ENCODE measurements at regions of chr4 and their contacts with region 1.

Region 1: DNA sequence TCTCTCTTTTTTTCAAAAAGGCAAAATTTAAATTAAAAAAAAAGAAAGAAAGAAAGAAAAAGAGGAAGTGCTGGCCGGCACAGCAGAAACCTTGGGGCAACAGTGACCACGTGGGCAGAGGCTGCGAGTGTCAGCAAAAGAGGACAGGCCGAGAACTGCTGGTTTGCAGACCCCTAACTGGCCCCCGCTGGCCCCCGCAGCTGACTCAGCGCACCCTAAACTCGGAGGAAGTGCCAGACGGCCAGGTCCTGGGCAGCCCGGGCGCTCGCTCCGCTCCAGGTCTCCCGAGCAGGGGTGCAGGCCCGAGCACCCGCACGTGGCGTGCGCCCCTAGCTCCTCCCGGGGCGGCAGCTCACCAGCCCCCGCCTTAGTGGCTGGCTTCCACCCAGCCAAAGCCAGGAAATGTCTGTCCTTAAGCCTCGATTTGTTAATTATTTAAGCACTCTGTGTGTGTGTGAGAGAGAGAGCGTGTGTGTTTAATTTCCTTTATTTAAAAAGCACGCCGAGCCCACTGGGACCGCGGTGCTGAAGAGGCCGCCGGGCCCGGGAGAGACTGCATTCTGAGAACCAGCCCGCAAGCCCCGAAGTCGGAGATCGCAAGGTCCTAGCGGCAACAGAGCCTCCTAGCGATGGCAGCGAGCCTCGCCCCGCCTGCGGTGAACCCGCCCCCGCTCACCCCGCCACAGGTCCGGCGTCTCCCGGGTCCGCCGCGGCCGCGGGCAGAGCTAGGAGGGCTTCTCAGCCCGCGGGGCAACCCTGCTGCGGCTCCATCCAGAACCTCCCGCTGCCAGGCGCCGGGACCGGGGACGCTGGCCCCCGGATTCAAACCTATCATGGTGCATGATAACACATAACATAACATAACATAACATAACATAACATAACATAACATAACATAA is 46.0 kb upstream of the CDKN2AIP start:
- DNase-seq: peak; percentile 60 to 75 (median 69)
- H3K4me3 ChIP-seq: peak overlapping the region; percentile 39 to 78 (median 48)
- H3K4me3 Mint-ChIP-seq: peak overlapping the region; percentile 90 to 95
- H3K27ac ChIP-seq: peak overlapping the region; percentile 66 to 82
- H3K27ac Mint-ChIP-seq: peak overlapping the region; percentile 73 to 95 (median 89)
- H3K4me1 ChIP-seq: peaks cover 48 to 62% of the 10 kb centered on the region in 2 donors
- H3K4me1 Mint-ChIP-seq: peaks cover 57% of the 10 kb centered on the region
- H3K27me3 ChIP-seq: no peaks in the 10 kb centered on the region
- H3K27me3 Mint-ChIP-seq: peaks cover 3 to 12% (median 9%) of the 10 kb centered on the region in 3 donors
- CTCF ChIP-seq: peak; percentile 54

Region 2: DNA sequence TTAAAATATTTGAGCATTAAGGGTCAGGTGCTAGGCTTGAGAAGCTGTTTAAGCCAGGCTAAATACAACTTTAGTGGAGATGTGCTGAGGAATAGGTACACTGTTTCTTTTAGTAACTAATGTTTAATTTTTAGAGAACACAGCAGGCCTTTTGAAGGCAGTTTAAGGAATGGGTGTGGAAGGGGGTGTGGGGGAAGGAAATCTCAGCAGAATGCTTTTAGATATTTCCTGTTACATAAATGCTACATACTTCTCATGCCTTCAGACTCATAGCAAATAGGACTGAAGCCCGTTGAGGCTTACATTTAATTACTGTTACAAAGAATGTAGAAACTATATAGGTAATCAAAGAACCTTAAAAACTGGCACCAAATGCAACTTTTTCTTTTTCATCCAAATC is 233.1 kb before region 1 on chr4:
- intact Hi-C with region 1: no loop called
- DNase-seq: no peak
- H3K4me3 ChIP-seq: no peak overlapping the region
- H3K4me3 Mint-ChIP-seq: no peak overlapping the region
- H3K27ac ChIP-seq: no peak overlapping the region
- H3K27ac Mint-ChIP-seq: no peak overlapping the region
- H3K4me1 ChIP-seq: no peaks in the 10 kb centered on the region
- H3K4me1 Mint-ChIP-seq: no peaks in the 10 kb centered on the region
- H3K27me3 ChIP-seq: no peaks in the 10 kb centered on the region
- H3K27me3 Mint-ChIP-seq: peaks cover 0 to 1% (median 0%) of the 10 kb centered on the region in 3 donors
- CTCF ChIP-seq: no peak

Region 3: DNA sequence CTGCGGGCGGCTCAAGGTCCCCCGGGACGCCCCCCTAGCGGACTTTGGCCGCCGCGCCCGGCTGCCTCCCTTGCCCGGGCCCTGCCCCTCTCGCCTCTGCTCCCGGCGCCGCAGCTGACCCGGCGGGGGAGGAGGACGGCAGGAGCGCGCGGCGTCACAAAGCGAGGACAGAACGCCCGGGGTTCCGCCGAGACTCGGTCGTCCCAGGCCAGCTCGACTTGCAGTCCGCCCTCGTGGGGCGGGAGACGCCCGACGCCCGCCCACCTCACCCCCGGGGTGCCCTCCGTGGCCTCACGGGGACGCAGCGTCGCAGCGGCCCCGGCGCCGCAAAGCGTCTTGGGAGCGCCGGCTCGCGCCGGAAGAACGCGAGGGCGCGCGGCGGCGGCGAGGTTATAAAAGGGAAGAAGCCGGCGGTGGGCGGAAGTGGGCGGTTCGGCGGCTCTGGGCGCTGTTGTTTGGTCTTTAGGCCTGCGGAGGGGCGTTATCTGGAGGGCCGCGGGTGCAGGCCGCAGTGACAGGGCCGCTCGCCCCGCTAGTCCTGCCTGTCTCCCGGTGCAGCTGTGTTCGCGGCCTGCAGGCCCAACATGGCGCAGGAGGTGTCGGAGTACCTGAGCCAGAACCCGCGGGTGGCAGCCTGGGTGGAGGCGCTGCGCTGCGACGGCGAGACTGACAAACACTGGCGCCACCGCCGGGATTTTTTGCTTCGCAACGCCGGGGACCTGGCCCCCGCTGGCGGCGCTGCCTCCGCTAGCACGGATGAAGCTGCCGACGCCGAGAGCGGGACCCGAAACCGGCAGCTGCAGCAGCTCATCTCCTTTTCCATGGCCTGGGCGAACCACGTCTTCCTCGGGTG is 46.0 kb after region 1 on chr4 and contains the start of gene CDKN2AIP:
- intact Hi-C with region 1: loop called in 1 of 2 experiments (anchors 5 kb)
- DNase-seq: peak; percentile 86 to 91 (median 89)
- H3K4me3 ChIP-seq: peak within 1 kb of the TSS; percentile 50 to 99 (median 92)
- H3K4me3 Mint-ChIP-seq: peak within 1 kb of the TSS; percentile 95 to 96
- H3K27ac ChIP-seq: peak within 1 kb of the TSS; percentile 92 to 96
- H3K27ac Mint-ChIP-seq: peak within 1 kb of the TSS; percentile 87 to 97 (median 95)
- H3K4me1 ChIP-seq: peaks cover 35 to 39% of the 10 kb centered on the region in 2 donors
- H3K4me1 Mint-ChIP-seq: peaks cover 35% of the 10 kb centered on the region
- H3K27me3 ChIP-seq: no peaks in the 10 kb centered on the region
- H3K27me3 Mint-ChIP-seq: peaks cover 0 to 8% (median 0%) of the 10 kb centered on the region in 3 donors
- CTCF ChIP-seq: peak; percentile 10
- polyA plus RNA-seq, gene CDKN2AIP: 3.1 to 4.4 (median 3.7) TPM

Region 4: GRCh38 chr4:183659029-183659871 is 260.8 kb after region 1 on chr4 and contains the starts of genes RWDD4 and TRAPPC11:
- intact Hi-C with region 1: loop called in 1 of 2 experiments (anchors 5 kb)
- DNase-seq: peak; percentile 96 to 97 (median 97)
- H3K4me3 ChIP-seq: peak within 1 kb of the TSS; percentile 82 to 98 (median 86)
- H3K4me3 Mint-ChIP-seq: peak within 1 kb of the TSS; percentile 96 to 97
- H3K27ac ChIP-seq: peak within 1 kb of the TSS; percentile 85 to 94
- H3K27ac Mint-ChIP-seq: peak within 1 kb of the TSS; percentile 96 to 99 (median 98)
- H3K4me1 ChIP-seq: peaks cover 22 to 33% of the 10 kb centered on the region in 2 donors
- H3K4me1 Mint-ChIP-seq: peaks cover 31% of the 10 kb centered on the region
- H3K27me3 ChIP-seq: no peaks in the 10 kb centered on the region
- H3K27me3 Mint-ChIP-seq: no peaks in the 10 kb centered on the region
- CTCF ChIP-seq: peak; percentile 19
- polyA plus RNA-seq, gene RWDD4: 4.4 to 21.2 (median 16.5) TPM
- polyA plus RNA-seq, gene TRAPPC11: 18.4 to 30.7 (median 29.7) TPM

Region 5: GRCh38 chr4:183747931-183748670 is 349.6 kb after region 1 on chr4:
- intact Hi-C with region 1: no loop called
- DNase-seq: no peak
- H3K4me3 ChIP-seq: no peak overlapping the region
- H3K4me3 Mint-ChIP-seq: no peak overlapping the region
- H3K27ac ChIP-seq: no peak overlapping the region
- H3K27ac Mint-ChIP-seq: no peak overlapping the region
- H3K4me1 ChIP-seq: no peaks in the 10 kb centered on the region
- H3K4me1 Mint-ChIP-seq: no peaks in the 10 kb centered on the region
- H3K27me3 ChIP-seq: no peaks in the 10 kb centered on the region
- H3K27me3 Mint-ChIP-seq: peaks cover 2 to 4% (median 3%) of the 10 kb centered on the region in 3 donors
- CTCF ChIP-seq: no peak

Region 6: GRCh38 chr4:184349283-184350039 is 951.0 kb after region 1 on chr4:
- intact Hi-C with region 1: loop called in 1 of 2 experiments (anchors 5 kb)
- DNase-seq: peak; percentile 49 to 86 (median 67)
- H3K4me3 ChIP-seq: peak overlapping the region in 1 of 3 experiments; percentile 55
- H3K4me3 Mint-ChIP-seq: peak overlapping the region in 1 of 2 donors; percentile 83
- H3K27ac ChIP-seq: peak overlapping the region; percentile 97 to 98
- H3K27ac Mint-ChIP-seq: peak overlapping the region; percentile 92 to 99 (median 98)
- H3K4me1 ChIP-seq: peaks cover 73 to 77% of the 10 kb centered on the region in 2 donors
- H3K4me1 Mint-ChIP-seq: peaks cover 81% of the 10 kb centered on the region
- H3K27me3 ChIP-seq: no peaks in the 10 kb centered on the region
- H3K27me3 Mint-ChIP-seq: peaks cover 0 to 9% (median 0%) of the 10 kb centered on the region in 3 donors
- CTCF ChIP-seq: no peak